ENCODE measurements at regions of chr15 and their contacts with region 1.

Region 1: GRCh38 chr15:35690698-35691116 is 144.7 kb upstream of the DPH6 start:
- DNase-seq: peak in 3 of 5 donors; percentile 30 to 50 (median 40)
- ATAC-seq: peak; percentile 94 to 97 (median 95)
- H3K4me3 ChIP-seq: peak overlapping the region in 1 of 12 donors; percentile 4
- H3K27ac ChIP-seq: peak overlapping the region; percentile 70 to 88 (median 80)
- H3K4me1 ChIP-seq: peaks cover 8 to 64% (median 40%) of the 10 kb centered on the region in 12 donors
- H3K27me3 ChIP-seq: no peaks in the 10 kb centered on the region
- CTCF ChIP-seq: no peak
- POLR2A ChIP-seq: peak in 1 of 2 donors; percentile 26

Region 2: GRCh38 chr15:35496585-35496984 is 194.1 kb before region 1 on chr15:
- intact Hi-C with region 1: no loop called
- DNase-seq: no peak
- ATAC-seq: no peak
- H3K4me3 ChIP-seq: no peak overlapping the region
- H3K27ac ChIP-seq: no peak overlapping the region
- H3K4me1 ChIP-seq: peaks cover 0 to 5% (median 0%) of the 10 kb centered on the region in 12 donors
- H3K27me3 ChIP-seq: no peaks in the 10 kb centered on the region
- CTCF ChIP-seq: no peak
- POLR2A ChIP-seq: no peak

Region 3: GRCh38 chr15:35545824-35546510 is 144.7 kb before region 1 on chr15 and contains the start of gene DPH6:
- intact Hi-C with region 1: loop called in 5 of 10 experiments (anchors 5 to 10 kb)
- DNase-seq: peak; percentile 85 to 93 (median 90)
- ATAC-seq: peak; percentile 92 to 96 (median 95)
- H3K4me3 ChIP-seq: peak within 1 kb of the TSS; percentile 62 to 97 (median 80)
- H3K27ac ChIP-seq: peak within 1 kb of the TSS; percentile 96 to 100 (median 99)
- H3K4me1 ChIP-seq: peaks cover 0 to 25% (median 16%) of the 10 kb centered on the region in 12 donors
- H3K27me3 ChIP-seq: no peaks in the 10 kb centered on the region
- CTCF ChIP-seq: peak in 5 of 12 donors; percentile 10 to 32 (median 18)
- POLR2A ChIP-seq: peak in 1 of 2 donors; percentile 85
- total RNA-seq, gene DPH6: 7.7 to 24.8 (median 16.0) TPM

Region 4: DNA sequence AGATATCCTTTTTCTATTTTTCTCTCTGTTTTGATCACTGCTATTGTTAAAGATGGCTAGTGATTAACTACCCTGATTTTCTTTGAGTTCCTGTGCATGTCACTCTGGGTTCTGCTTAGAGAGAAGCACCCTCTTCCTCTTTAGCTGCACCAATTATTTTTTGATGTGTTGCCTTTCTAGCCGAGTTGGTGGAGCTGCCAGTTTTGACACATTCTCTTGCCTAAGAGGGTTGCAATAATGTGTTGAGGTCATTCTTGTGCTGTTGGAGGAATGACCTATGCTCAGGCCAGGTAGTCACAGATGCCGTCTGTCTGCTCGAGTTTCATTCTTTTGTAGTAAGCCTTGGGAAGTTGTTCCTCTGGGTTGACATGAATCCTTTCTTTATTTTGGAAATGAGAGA is 60.2 kb before region 1 on chr15:
- intact Hi-C with region 1: loop called in 1 of 10 experiments (anchors 5 kb)
- DNase-seq: peak in 4 of 5 donors; percentile 10 to 43 (median 34)
- ATAC-seq: peak; percentile 79 to 95 (median 92)
- H3K4me3 ChIP-seq: no peak overlapping the region
- H3K27ac ChIP-seq: peak overlapping the region in 7 of 12 donors; percentile 13 to 72 (median 43)
- H3K4me1 ChIP-seq: peaks cover 0 to 22% (median 11%) of the 10 kb centered on the region in 12 donors
- H3K27me3 ChIP-seq: no peaks in the 10 kb centered on the region
- CTCF ChIP-seq: no peak
- POLR2A ChIP-seq: no peak

Region 5: GRCh38 chr15:35665896-35666536 is 24.7 kb before region 1 on chr15:
- intact Hi-C with region 1: loop called in 1 of 10 experiments (anchors 2 kb)
- DNase-seq: peak in 4 of 5 donors; percentile 67 to 81 (median 78)
- ATAC-seq: peak; percentile 96 to 97 (median 96)
- H3K4me3 ChIP-seq: no peak overlapping the region
- H3K27ac ChIP-seq: peak overlapping the region; percentile 49 to 88 (median 82)
- H3K4me1 ChIP-seq: peaks cover 3 to 46% (median 24%) of the 10 kb centered on the region in 12 donors
- H3K27me3 ChIP-seq: no peaks in the 10 kb centered on the region
- CTCF ChIP-seq: no peak
- POLR2A ChIP-seq: no peak

Region 6: GRCh38 chr15:35674873-35675781 is 15.6 kb before region 1 on chr15:
- intact Hi-C with region 1: loop called in 1 of 10 experiments (anchors 2 kb)
- DNase-seq: no peak
- ATAC-seq: peak in 3 of 4 donors; percentile 13 to 43 (median 38)
- H3K4me3 ChIP-seq: no peak overlapping the region
- H3K27ac ChIP-seq: peak overlapping the region; percentile 16 to 70 (median 59)
- H3K4me1 ChIP-seq: peaks cover 11 to 49% (median 38%) of the 10 kb centered on the region in 12 donors
- H3K27me3 ChIP-seq: no peaks in the 10 kb centered on the region
- CTCF ChIP-seq: no peak
- POLR2A ChIP-seq: no peak

Region 7: DNA sequence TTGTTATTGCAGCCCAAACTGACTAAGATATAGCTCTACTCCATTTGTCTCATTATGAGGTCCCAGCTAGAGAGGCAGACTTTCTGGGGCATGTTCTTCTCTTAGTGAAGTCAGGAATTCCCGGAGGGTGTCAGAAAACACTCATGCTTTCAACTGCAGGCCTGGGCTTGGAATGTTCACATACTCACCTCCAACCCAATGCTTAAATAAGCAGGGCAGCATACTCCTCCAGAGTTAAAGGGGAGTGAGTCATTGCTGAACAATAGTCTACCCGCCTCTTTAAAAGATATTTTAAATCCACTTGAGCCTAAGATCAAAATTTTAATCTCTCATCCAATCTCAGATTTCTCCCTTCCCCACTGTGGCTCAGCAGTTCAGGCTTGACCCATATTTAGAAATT is 23.0 kb after region 1 on chr15:
- intact Hi-C with region 1: no loop called
- DNase-seq: no peak
- ATAC-seq: no peak
- H3K4me3 ChIP-seq: no peak overlapping the region
- H3K27ac ChIP-seq: no peak overlapping the region
- H3K4me1 ChIP-seq: no peaks in the 10 kb centered on the region
- H3K27me3 ChIP-seq: no peaks in the 10 kb centered on the region
- CTCF ChIP-seq: no peak
- POLR2A ChIP-seq: no peak

Region 8: GRCh38 chr15:35907511-35907910 is 216.8 kb after region 1 on chr15:
- intact Hi-C with region 1: no loop called
- DNase-seq: no peak
- ATAC-seq: no peak
- H3K4me3 ChIP-seq: no peak overlapping the region
- H3K27ac ChIP-seq: no peak overlapping the region
- H3K4me1 ChIP-seq: peaks cover 0 to 10% (median 0%) of the 10 kb centered on the region in 12 donors
- H3K27me3 ChIP-seq: no peaks in the 10 kb centered on the region
- CTCF ChIP-seq: no peak
- POLR2A ChIP-seq: no peak

Measured in heart left ventricle (tissue), 16 donors.